ENCODE measurements at regions of chr7 and their contacts with region 1.

Region 1: DNA sequence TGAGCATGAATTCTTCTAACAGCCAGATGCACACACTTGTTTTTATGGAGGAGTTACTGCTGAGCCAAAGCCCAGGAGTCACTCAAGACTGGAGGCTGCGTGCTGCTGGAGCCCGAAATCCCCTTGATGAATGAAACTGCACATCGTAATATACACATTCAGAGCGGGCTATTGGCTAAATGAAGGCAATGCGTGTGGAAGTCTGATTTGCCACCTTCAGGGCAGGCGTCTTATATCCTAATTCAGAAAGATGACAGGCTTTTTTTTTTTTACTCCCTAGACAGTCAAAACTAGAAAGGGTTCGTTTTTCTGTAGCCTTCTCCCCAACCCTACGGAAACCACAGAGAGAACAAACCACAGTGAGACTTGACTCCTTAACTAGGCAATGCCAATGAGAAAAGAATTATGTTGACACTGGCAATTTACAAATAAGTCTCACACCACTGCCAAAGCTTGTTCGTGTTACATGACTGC is 227.2 kb upstream of the KLF14 start:
- DNase-seq: peak in 1 of 2 experiments; percentile 82
- ATAC-seq: peak; percentile 69 to 79
- H3K4me3 ChIP-seq: peak overlapping the region; percentile 44
- H3K27ac ChIP-seq: peak overlapping the region; percentile 94 to 96
- H3K4me1 ChIP-seq: peaks cover 76% of the 10 kb centered on the region
- CTCF ChIP-seq: no peak
- EP300 ChIP-seq: no peak
- POLR2A ChIP-seq: 0 out of 2 replicates have a peak, but pooled peaks have one; percentile 18
- RAD21 ChIP-seq: no peak

Region 2: DNA sequence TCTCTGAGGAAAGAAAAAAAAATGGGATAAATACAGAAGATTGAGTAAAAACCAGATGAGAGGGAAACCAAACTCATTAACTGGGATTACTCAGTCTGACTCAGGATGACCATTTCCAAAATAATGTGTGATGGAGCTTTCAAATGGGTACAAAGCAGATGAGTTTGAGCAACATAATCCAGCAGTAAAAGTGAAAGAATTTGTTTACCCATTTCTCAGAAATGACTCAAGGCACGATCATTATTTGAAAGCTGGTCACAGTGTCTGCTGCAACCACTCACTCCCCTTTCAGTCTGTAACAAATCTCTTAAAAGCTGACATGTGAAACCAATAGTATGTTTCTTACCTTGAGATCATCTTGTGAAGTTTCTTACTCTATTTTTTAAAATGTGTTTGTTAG is 122.4 kb before region 1 on chr7:
- CTCF ChIA-PET with region 1: no interaction called
- POLR2A ChIA-PET with region 1: no interaction called
- DNase-seq: peak; percentile 55 to 65
- ATAC-seq: peak; percentile 42 to 65; a peak in 4 of 6 replicates
- H3K4me3 ChIP-seq: no peak overlapping the region
- H3K27ac ChIP-seq: peak overlapping the region; percentile 61 to 62
- H3K4me1 ChIP-seq: peaks cover 39% of the 10 kb centered on the region
- CTCF ChIP-seq: no peak
- EP300 ChIP-seq: peak; percentile 61 to 78; a peak in 2 of 5 replicates
- POLR2A ChIP-seq: no peak
- RAD21 ChIP-seq: 0 out of 5 replicates have a peak, but pooled peaks have one; percentile 17 to 24

Region 3: DNA sequence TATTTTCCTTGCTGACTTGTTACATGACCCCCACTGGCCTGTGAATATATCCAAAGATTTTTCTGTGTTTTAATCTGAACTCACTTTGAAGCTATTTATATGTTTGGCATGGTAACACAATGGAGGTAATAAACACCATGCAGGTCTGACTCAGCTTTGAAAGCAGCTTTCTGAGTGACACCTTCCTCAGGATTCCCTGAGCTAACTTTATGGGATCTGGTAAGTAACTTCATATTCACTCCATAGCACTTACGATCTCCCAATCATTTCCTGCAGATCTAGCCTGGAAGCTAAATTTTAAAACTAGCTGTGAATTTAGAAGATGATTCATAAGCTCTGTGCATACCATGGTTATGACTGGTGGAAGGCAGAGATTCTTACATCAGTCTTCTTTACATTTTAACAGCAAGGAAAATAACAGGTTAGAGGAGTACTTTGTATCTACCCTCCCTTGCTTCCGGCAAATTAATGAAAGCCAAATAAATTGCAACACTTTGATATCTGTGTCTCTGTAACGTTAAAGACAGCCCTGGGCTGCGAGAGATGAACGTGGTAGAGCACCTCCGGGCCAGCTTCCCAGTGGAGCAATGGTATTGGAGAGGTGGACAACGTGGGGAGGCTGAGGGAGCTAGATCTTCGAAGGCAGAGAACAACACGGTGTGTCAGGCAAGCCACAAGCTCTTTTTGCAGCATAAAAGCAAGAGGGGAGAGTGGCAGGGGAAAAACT is 57.0 kb before region 1 on chr7:
- CTCF ChIA-PET with region 1: interaction called, 110 read pairs
- POLR2A ChIA-PET with region 1: interaction called, 13 read pairs
- DNase-seq: peak; percentile 80 to 94
- ATAC-seq: peak; percentile 63 to 65
- H3K4me3 ChIP-seq: peak overlapping the region; percentile 10; the same call in 1 of the 3 replicates
- H3K27ac ChIP-seq: peak overlapping the region; percentile 92 to 93
- H3K4me1 ChIP-seq: peaks cover 94% of the 10 kb centered on the region
- CTCF ChIP-seq: no peak
- EP300 ChIP-seq: peak; percentile 94 to 95; a peak in 3 of 5 replicates
- POLR2A ChIP-seq: no peak
- RAD21 ChIP-seq: peak in 1 of 2 experiments; percentile 46; a peak in 1 of 5 replicates

Region 4: DNA sequence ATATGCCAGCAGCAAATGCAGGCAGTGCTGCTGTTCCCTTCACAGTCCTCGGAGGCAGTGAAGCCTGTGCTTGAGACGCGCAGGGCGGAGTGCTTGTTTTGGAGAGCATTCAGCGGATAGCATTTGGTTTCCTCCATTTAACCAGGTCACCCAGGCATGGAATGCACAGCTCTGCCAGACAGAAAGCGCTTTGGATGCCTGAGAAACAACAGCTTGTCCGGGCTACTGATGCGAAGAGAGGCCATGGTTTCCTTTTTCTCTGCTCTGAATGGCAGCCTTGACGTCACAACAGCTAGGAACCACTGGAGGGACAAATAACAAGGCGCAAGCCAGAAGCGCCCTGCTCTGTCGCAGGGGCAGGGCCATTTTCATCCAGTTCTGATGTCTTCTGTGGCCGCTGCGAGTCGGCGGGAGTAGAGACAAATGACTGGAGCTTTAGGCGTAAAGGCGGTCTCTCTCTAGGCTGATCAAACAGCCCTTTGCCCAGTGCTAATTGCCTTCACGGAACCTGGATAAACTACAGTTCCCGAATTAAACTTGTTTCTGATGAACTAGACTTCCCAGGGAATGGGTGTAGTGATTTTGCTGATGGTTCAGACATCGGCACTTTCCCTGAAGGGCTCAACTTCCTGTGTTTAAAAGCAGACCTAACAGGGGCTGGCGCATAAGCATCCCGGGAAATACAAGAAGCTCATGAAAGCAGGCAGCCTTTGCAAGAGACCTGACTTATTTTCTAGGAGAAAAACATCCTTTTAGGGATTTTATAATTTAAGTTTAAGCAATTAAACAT is 39.6 kb before region 1 on chr7:
- CTCF ChIA-PET with region 1: interaction called, 26 read pairs
- POLR2A ChIA-PET with region 1: no interaction called
- DNase-seq: no peak
- ATAC-seq: peak; percentile 20 to 27; a peak in 4 of 6 replicates
- H3K4me3 ChIP-seq: peak overlapping the region; percentile 3; the same call in 1 of the 3 replicates
- H3K27ac ChIP-seq: peak overlapping the region; percentile 85 to 89
- H3K4me1 ChIP-seq: peaks cover 100% of the 10 kb centered on the region
- CTCF ChIP-seq: no peak
- EP300 ChIP-seq: no peak
- POLR2A ChIP-seq: no peak
- RAD21 ChIP-seq: no peak

Region 5: DNA sequence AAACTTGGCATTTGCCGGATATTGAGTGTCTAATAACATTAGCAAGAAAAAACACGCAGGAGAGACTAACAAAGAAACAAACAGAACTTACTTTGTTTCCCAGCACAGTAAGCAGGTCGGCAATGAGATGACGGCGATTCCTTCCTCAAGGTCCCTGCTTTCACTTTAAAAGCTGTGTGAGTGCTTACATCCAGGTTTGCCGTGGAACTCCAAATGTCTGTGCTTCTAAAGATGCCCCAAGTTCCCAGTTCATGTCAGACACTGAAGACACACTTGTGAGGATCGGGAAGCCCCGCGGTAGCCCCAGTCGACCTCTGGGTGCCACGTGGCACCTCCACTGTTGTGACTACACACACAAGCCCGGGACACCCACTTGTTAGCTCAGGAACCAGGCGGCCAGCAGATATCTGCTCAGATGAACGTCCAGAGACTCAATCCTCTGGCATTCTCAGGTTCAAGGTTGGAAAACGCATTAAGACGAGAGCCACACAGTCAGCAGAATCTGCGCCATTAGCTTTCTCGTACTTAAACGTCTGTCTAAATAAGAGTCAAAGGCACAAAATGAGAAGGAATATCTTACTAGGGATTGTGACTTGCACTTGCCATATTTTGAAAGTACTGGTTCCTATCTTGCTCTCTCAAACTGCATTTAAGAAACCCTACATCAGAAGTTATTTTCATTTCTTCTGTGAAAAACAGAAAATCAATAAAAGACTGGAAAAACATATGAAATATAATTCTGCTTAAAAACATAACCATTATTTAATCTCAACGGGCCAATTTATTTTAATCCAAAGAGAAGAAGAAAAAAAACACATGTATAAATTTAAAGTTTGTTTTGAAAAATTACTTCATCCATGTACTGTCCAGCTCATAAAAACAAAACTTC is 19.6 kb before region 1 on chr7:
- CTCF ChIA-PET with region 1: interaction called, 45 read pairs
- POLR2A ChIA-PET with region 1: interaction called, 21 read pairs
- DNase-seq: peak; percentile 49 to 80
- ATAC-seq: peak; percentile 75 to 78
- H3K4me3 ChIP-seq: peak overlapping the region; percentile 52
- H3K27ac ChIP-seq: peak overlapping the region; percentile 86 to 87
- H3K4me1 ChIP-seq: peaks cover 82% of the 10 kb centered on the region
- CTCF ChIP-seq: no peak
- EP300 ChIP-seq: no peak
- POLR2A ChIP-seq: no peak
- RAD21 ChIP-seq: 0 out of 5 replicates have a peak, but pooled peaks of 1 of the 2 experiments have one; percentile 19

Region 6: DNA sequence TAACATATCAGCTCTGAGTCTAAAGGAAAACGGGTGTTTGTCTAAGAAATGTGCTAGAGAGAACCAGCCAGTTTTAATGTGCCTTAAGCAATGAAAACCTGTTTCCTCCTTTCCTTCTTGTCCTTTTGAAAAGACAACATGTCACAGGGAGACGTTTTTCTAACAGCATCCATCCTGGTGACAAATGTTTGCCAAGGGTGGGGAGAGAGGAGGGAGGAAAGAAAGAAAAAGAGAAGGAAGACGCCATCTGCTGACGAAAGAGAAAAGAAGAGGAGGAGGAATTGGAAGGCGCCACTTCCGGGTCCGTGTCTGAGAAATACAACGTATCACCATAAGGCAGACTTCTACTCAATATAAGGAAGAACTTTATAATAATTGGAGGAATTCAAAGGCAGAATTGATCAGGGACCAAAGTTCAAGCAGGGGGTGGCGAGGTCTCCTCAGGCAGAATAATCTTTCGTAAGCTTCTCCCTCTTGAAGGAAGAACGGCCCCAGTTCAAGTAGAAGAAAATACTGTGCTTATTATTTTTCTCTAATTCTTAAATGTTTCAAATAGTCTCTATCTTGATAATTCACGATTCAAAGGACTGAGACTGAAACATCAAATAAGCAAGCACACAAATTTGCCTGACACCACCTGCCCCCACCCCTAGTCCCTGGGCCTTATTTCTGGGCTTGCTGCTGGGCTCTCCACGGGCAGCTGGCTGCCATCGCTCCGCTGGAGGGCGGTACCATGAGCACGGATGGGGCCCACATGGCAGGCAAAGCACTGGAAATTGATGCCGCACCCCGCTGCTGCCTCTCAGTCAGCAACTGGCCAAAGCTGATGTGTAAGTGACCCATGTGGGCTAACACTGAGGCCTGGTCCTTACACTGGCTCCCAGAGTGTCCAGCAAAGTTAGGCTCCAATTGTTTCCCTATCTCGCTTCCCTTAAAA is 46.5 kb after region 1 on chr7:
- CTCF ChIA-PET with region 1: interaction called, 11 read pairs
- POLR2A ChIA-PET with region 1: interaction called, 6 read pairs
- DNase-seq: peak; percentile 79 to 93
- ATAC-seq: peak; percentile 86
- H3K4me3 ChIP-seq: no peak overlapping the region
- H3K27ac ChIP-seq: peak overlapping the region; percentile 87 to 91
- H3K4me1 ChIP-seq: peaks cover 65% of the 10 kb centered on the region
- CTCF ChIP-seq: peak; percentile 68
- EP300 ChIP-seq: no peak
- POLR2A ChIP-seq: no peak
- RAD21 ChIP-seq: peak; percentile 76 to 82